PC-3 (cell line): ENCODE measurements at regions of chr17 and their contacts with region 1.

Region 1: GRCh38 chr17:74864866-74865395 is 5.2 kb upstream of the GRIN2C start:
- DNase-seq: peak; percentile 82
- ATAC-seq: peak; percentile 65
- H3K4me3 ChIP-seq: no peak overlapping the region
- H3K27ac ChIP-seq: no peak overlapping the region
- H3K4me1 ChIP-seq: no peaks in the 10 kb centered on the region
- H3K27me3 ChIP-seq: peaks cover 23% of the 10 kb centered on the region
- CTCF ChIP-seq: peak; percentile 98

Region 2: DNA sequence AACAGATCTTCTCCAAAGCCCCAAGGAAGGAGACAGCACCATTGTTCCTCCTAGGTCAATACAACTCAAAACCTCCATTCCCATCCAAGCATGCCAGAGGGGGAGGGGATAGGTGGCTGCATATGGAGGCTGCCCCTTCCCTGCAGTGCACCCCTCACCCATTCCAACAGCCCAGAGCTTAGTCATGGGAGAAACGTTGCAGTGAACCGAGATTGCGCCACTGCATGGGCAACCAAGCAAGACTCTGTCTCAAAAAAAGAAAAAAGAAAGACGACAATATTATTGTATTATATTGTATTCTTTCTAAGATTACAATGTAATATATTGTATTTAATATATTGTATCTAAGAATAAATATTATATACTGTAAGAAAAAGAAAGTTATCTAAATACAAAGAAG is 205.0 kb before region 1 on chr17:
- CTCF ChIA-PET with region 1: no interaction called
- POLR2A ChIA-PET with region 1: no interaction called
- intact Hi-C with region 1: loop called (anchors 5 kb)
- DNase-seq: no peak
- ATAC-seq: no peak
- H3K4me3 ChIP-seq: no peak overlapping the region
- H3K27ac ChIP-seq: no peak overlapping the region
- H3K4me1 ChIP-seq: no peaks in the 10 kb centered on the region
- H3K27me3 ChIP-seq: peaks cover 76% of the 10 kb centered on the region
- CTCF ChIP-seq: no peak

Region 3: GRCh38 chr17:74748529-74749365 is 116.2 kb before region 1 on chr17 and contains the start of gene NHERF1:
- CTCF ChIA-PET with region 1: no interaction called
- POLR2A ChIA-PET with region 1: no interaction called
- intact Hi-C with region 1: loop called (anchors 1 kb)
- DNase-seq: peak; percentile 98
- ATAC-seq: peak; percentile 90
- H3K4me3 ChIP-seq: peak within 1 kb of the TSS; percentile 78
- H3K27ac ChIP-seq: no peak within 1 kb of the TSS
- H3K4me1 ChIP-seq: peaks cover 27% of the 10 kb centered on the region
- H3K27me3 ChIP-seq: no peaks in the 10 kb centered on the region
- CTCF ChIP-seq: no peak; the same call in 1 of the 2 replicates
- total RNA-seq, gene NHERF1: 75.0 and 116 TPM in 2 replicates

Region 4: DNA sequence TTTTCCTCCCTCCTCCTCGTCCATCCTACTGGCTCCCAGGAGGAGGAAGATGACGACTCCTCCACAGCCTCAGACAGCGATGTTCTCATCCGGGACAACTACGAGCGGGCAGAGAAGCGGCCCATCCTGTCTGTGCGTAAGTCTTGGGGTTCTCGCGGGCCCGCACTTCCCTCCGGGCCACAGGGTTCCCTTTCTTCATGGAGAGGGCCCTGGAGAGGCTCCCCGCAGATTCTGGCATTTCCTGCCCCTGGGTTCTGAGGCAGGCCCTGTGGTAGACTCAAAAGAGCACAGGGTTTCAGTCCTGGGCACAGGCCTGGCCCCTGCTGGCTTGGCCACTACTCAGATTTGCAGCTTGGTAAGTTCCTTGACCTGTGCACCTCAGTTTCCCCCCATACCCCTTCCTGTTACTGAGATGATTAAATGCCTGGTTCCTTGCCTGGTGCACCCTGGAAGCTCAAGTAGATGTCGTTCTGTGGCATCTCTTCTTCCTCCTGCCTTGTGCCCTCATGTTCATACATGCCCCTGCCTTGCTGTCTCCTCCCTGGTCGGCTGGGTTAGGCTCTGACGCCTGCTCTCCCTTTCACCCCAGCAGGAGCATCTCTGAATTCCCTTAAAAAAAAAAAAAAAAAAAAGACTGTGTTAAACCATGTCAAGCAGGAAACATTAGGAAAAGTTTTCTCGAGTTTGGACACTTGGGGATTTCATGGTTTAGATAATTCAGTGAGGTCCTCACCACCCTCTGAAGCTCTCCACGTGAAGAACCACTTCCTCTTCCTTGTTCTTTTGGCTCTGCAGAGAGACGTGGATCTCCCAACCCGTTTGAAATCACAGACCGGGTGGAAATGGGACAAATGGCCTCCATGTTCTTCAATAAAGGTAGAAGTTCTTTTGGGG is 74.5 kb before region 1 on chr17:
- CTCF ChIA-PET with region 1: interaction called, 3 read pairs
- POLR2A ChIA-PET with region 1: no interaction called
- intact Hi-C with region 1: loop called (anchors 1 kb)
- DNase-seq: no peak
- ATAC-seq: no peak
- H3K4me3 ChIP-seq: no peak overlapping the region
- H3K27ac ChIP-seq: no peak overlapping the region
- H3K4me1 ChIP-seq: no peaks in the 10 kb centered on the region
- H3K27me3 ChIP-seq: no peaks in the 10 kb centered on the region
- CTCF ChIP-seq: no peak

Region 5: GRCh38 chr17:74842599-74843351 is 22.2 kb before region 1 on chr17:
- CTCF ChIA-PET with region 1: interaction called, 17 read pairs
- POLR2A ChIA-PET with region 1: no interaction called
- intact Hi-C with region 1: loop called (anchors 1 kb)
- DNase-seq: peak; percentile 82
- ATAC-seq: peak; percentile 90
- H3K4me3 ChIP-seq: peak overlapping the region; percentile 71
- H3K27ac ChIP-seq: no peak overlapping the region
- H3K4me1 ChIP-seq: peaks cover 6% of the 10 kb centered on the region; the same call in 1 of the 2 replicates
- H3K27me3 ChIP-seq: no peaks in the 10 kb centered on the region
- CTCF ChIP-seq: peak; percentile 61

Region 6: DNA sequence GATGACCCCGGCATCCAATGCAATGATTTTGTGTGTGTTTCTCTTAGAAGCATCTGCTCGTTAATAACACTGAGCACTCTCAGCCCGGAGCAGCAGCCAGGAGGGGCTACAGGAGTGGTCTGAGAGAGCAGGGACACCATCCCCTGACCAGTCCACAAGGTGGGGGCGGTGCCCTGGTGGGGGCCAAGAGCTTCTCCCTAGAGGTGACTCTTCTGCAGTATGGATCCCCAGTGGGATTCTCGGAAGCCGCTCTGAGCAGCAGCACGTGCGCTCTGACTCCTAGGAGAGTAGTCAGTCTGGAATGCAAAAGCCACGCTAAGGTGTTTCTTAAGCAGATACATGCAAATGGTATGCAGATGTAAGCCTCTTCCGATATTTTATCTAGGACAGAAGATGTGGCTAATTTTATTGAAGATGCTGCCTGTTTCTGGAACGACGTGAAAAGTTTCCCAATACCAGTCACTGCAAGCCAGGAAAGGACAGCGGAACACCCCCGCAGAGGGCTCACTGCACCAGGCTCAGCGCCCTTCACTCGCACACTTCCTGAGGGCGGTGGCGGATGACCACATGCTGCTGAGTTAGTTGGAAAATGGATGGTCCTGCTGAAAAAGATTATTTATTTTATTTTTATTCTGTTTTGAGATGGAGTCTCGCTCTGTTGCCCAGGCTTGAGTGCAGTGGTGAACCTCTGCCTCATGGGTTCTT is 18.3 kb after region 1 on chr17:
- CTCF ChIA-PET with region 1: no interaction called
- POLR2A ChIA-PET with region 1: no interaction called
- intact Hi-C with region 1: no loop called
- DNase-seq: no peak
- ATAC-seq: no peak
- H3K4me3 ChIP-seq: no peak overlapping the region
- H3K27ac ChIP-seq: no peak overlapping the region
- H3K4me1 ChIP-seq: no peaks in the 10 kb centered on the region
- H3K27me3 ChIP-seq: peaks cover 15% of the 10 kb centered on the region
- CTCF ChIP-seq: no peak

Region 7: GRCh38 chr17:75679706-75680442 is 814.9 kb after region 1 on chr17:
- CTCF ChIA-PET with region 1: no interaction called
- POLR2A ChIA-PET with region 1: no interaction called
- intact Hi-C with region 1: no loop called
- DNase-seq: peak; percentile 91
- ATAC-seq: peak; percentile 77
- H3K4me3 ChIP-seq: 0 out of 2 replicates have a peak overlapping the region, but pooled peaks have one; percentile 34
- H3K27ac ChIP-seq: peak overlapping the region; percentile 39
- H3K4me1 ChIP-seq: peaks cover 57% of the 10 kb centered on the region
- H3K27me3 ChIP-seq: no peaks in the 10 kb centered on the region
- CTCF ChIP-seq: peak; percentile 86